A549 (cell line): ENCODE measurements at regions of chr10 and their contacts with region 1.

Region 1: GRCh38 chr10:22316285-22317120 is at the start of gene COMMD3:
- DNase-seq: peak; percentile 60 to 87
- ATAC-seq: peak; percentile 76 to 85
- H3K4me3 ChIP-seq: peak within 1 kb of the TSS; percentile 92
- H3K27ac ChIP-seq: peak within 1 kb of the TSS; percentile 95 to 96
- H3K4me1 ChIP-seq: peaks cover 23% of the 10 kb centered on the region
- CTCF ChIP-seq: no peak
- EP300 ChIP-seq: no peak
- POLR2A ChIP-seq: peak; percentile 94
- RAD21 ChIP-seq: no peak
- polyA plus RNA-seq, gene COMMD3: 70.2 and 70.8 TPM in 2 replicates

Region 2: GRCh38 chr10:21771219-21771618 is 545.3 kb before region 1 on chr10:
- CTCF ChIA-PET with region 1: no interaction called
- POLR2A ChIA-PET with region 1: interaction called, 11 read pairs
- DNase-seq: no peak
- ATAC-seq: no peak
- H3K4me3 ChIP-seq: no peak overlapping the region
- H3K27ac ChIP-seq: no peak overlapping the region
- H3K4me1 ChIP-seq: no peaks in the 10 kb centered on the region
- CTCF ChIP-seq: no peak
- EP300 ChIP-seq: no peak
- POLR2A ChIP-seq: no peak
- RAD21 ChIP-seq: no peak

Region 3: DNA sequence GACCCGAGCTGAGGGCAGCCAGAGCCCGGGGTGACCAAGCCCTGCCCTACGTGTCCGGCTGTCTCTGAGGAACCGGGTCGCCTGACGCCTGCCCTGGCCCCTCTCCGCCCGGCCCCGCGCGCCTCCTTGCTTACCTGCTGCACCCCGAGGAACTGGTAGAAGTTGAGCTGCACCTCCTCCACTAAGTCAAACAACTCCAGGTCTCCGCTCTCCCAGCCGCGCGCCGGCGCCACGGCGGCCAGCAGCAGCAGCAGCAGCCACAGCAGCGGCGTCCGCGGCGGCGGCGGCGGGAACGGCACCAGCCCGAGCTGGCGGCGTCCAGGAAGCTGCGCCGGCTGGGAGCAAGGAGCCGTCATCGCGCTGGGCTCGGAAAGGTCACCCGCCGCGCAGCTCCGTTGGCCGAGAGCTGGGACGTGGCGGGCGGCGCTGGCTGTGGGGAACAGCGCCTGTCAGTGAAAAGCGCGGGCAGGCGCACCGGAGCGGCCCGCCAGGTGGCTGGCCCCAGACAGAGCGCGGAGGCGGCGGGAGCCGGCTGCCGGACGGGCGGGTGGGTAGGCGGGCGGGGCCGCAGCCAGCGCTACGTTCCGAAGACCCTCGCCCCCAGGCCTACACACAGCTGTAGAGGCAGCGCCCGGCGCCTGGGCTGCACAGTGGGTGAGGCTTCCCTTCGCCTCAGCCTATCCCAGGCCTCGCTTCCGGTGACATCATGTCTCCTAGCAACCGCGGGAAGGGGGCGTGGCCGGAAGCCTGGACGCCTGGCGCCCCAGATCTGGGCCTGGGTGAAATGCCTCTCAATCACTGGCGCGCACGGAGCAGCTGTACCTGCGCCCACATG is 313.2 kb before region 1 on chr10 and contains the start of gene DNAJC1:
- CTCF ChIA-PET with region 1: no interaction called
- POLR2A ChIA-PET with region 1: interaction called, 19 read pairs
- DNase-seq: peak; percentile 91 to 96
- ATAC-seq: peak; percentile 95 to 99
- H3K4me3 ChIP-seq: peak within 1 kb of the TSS; percentile 76
- H3K27ac ChIP-seq: peak within 1 kb of the TSS; percentile 77 to 91
- H3K4me1 ChIP-seq: peaks cover 11% of the 10 kb centered on the region; the same call in 1 of the 3 replicates
- CTCF ChIP-seq: no peak
- EP300 ChIP-seq: no peak
- POLR2A ChIP-seq: peak; percentile 70
- RAD21 ChIP-seq: no peak; a peak in 1 of 5 replicates
- polyA plus RNA-seq, gene DNAJC1: 29.8 and 34.2 TPM in 2 replicates

Region 4: GRCh38 chr10:22228943-22229801 is 87.3 kb before region 1 on chr10:
- CTCF ChIA-PET with region 1: interaction called, 3 read pairs
- POLR2A ChIA-PET with region 1: interaction called, 62 read pairs
- DNase-seq: peak; percentile 81 to 94
- ATAC-seq: peak; percentile 93 to 97
- H3K4me3 ChIP-seq: peak overlapping the region; percentile 64
- H3K27ac ChIP-seq: peak overlapping the region; percentile 78 to 88
- H3K4me1 ChIP-seq: peaks cover 6% of the 10 kb centered on the region; the same call in 2 of the 3 replicates
- CTCF ChIP-seq: no peak
- EP300 ChIP-seq: no peak
- POLR2A ChIP-seq: peak; percentile 29; the same call in 1 of the 2 replicates
- RAD21 ChIP-seq: peak in 1 of 2 experiments; percentile 18; a peak in 2 of 5 replicates

Region 5: DNA sequence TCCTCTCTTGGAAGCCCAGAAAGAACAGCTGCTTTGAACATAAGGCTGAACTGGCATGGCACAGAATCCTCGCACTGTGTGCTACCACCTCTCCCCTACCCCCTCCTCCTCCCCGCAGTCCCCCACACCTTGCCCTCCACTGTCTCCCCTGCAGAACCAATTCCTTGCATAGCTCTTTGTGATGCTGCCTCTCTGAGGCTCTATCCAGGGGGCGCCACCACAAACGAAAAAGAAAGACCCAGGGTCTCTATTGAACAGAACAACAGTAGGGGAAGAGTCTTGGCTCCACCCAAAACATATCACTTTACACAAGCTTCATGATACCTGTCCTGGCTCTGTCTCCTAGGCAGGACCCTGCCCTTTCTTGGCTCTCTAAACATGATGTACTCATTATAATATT is 72.5 kb before region 1 on chr10:
- CTCF ChIA-PET with region 1: interaction called, 5 read pairs
- POLR2A ChIA-PET with region 1: interaction called, 10 read pairs
- DNase-seq: no peak
- ATAC-seq: no peak
- H3K4me3 ChIP-seq: no peak overlapping the region
- H3K27ac ChIP-seq: peak overlapping the region; percentile 18 to 89; a peak in 4 of 6 replicates
- H3K4me1 ChIP-seq: peaks cover 44% of the 10 kb centered on the region
- CTCF ChIP-seq: peak; percentile 20; the same call in 2 of the 3 replicates
- EP300 ChIP-seq: no peak
- POLR2A ChIP-seq: no peak
- RAD21 ChIP-seq: no peak

Region 6: DNA sequence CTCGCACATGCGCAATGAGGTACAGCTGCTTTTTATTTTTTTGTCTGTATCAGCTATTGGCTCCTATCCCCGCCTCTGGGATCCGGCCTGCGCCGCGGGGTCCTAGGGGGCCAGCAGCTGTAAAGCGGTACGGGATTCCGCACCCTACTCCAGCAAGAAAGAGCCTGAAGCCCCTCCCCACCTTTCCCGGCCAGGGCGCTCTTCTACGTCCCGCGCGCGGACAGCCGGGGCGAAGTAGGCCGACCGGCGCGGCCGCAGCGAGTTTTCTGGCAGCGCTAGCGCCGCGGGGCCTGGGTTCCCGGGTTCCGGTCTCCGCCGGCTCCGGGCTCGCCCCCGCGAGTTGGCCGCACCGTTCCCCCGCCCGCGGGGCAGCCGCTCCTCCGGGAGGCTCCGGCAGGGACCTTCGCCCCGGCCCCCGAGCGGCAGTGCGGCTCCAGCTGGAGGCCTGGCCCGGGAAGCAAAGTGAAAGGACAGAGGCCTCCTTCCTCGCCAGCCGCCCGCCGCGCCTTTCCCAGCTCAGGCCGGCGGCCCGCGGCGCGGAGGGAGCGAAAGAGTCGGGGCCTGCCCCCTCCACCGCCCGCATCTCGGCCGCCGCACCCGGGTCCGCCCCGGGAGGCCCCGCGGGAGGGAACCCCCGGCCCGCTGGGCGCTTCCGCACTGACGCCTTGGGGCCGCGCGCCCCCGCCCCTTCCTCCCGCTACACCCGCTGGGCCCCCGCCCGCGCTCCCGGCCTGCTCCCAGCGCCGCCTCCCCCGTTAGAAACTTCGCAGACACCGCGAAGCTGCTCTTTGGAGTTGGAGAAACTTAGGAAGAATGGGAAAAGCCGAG is 24.1 kb after region 1 on chr10:
- CTCF ChIA-PET with region 1: no interaction called
- POLR2A ChIA-PET with region 1: interaction called, 17 read pairs
- DNase-seq: peak; percentile 76 to 85
- ATAC-seq: peak; percentile 79 to 81
- H3K4me3 ChIP-seq: peak overlapping the region; percentile 73
- H3K27ac ChIP-seq: peak overlapping the region; percentile 92 to 99
- H3K4me1 ChIP-seq: peaks cover 15% of the 10 kb centered on the region; the same call in 1 of the 3 replicates
- CTCF ChIP-seq: 0 out of 3 replicates have a peak, but pooled peaks have one; percentile 2
- EP300 ChIP-seq: no peak
- POLR2A ChIP-seq: peak; percentile 40
- RAD21 ChIP-seq: no peak; a peak in 1 of 5 replicates